ENCODE measurements at regions of chr10 and their contacts with region 1.

Region 1: GRCh38 chr10:117174439-117175214 is 22.7 kb upstream of the KCNK18 start:
- DNase-seq: peak; percentile 56
- ATAC-seq: peak; percentile 83
- H3K4me3 Mint-ChIP-seq: peak overlapping the region; percentile 85
- H3K27ac Mint-ChIP-seq: no peak overlapping the region
- H3K4me1 Mint-ChIP-seq: peaks cover 18% of the 10 kb centered on the region
- H3K27me3 Mint-ChIP-seq: peaks cover 38% of the 10 kb centered on the region
- CTCF ChIP-seq: no peak

Region 2: DNA sequence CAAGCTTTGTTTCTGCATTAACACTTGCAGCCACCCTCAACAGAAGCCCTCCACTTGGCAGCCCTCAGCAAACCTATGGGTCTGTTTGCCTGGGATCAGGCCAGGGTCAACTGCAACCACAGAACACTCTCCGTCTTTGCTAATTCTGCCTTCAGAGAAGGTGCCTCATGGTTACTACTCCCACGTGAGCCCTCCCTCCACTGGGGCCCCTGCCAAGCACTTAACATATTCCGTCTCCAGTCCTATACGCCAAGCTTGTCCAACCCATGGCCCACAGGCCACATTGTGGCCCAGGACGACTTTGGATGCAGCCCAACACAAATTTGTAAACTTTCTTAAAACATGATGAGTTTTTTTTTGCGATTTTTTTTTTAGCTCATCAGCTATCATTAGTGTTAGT is 487.0 kb before region 1 on chr10:
- CTCF ChIA-PET with region 1: interaction called, 15 read pairs
- POLR2A ChIA-PET with region 1: no interaction called
- intact Hi-C with region 1: loop called (anchors 1 kb)
- DNase-seq: no peak
- ATAC-seq: no peak
- H3K4me3 Mint-ChIP-seq: no peak overlapping the region
- H3K27ac Mint-ChIP-seq: no peak overlapping the region
- H3K4me1 Mint-ChIP-seq: no peaks in the 10 kb centered on the region
- H3K27me3 Mint-ChIP-seq: no peaks in the 10 kb centered on the region
- CTCF ChIP-seq: no peak

Region 3: GRCh38 chr10:116787893-116788665 is 386.5 kb before region 1 on chr10:
- CTCF ChIA-PET with region 1: interaction called, 10 read pairs
- POLR2A ChIA-PET with region 1: no interaction called
- intact Hi-C with region 1: no loop called
- DNase-seq: peak; percentile 49
- ATAC-seq: peak; percentile 82
- H3K4me3 Mint-ChIP-seq: peak overlapping the region; percentile 46
- H3K27ac Mint-ChIP-seq: no peak overlapping the region
- H3K4me1 Mint-ChIP-seq: peaks cover 12% of the 10 kb centered on the region
- H3K27me3 Mint-ChIP-seq: peaks cover 20% of the 10 kb centered on the region
- CTCF ChIP-seq: peak; percentile 96

Region 4: DNA sequence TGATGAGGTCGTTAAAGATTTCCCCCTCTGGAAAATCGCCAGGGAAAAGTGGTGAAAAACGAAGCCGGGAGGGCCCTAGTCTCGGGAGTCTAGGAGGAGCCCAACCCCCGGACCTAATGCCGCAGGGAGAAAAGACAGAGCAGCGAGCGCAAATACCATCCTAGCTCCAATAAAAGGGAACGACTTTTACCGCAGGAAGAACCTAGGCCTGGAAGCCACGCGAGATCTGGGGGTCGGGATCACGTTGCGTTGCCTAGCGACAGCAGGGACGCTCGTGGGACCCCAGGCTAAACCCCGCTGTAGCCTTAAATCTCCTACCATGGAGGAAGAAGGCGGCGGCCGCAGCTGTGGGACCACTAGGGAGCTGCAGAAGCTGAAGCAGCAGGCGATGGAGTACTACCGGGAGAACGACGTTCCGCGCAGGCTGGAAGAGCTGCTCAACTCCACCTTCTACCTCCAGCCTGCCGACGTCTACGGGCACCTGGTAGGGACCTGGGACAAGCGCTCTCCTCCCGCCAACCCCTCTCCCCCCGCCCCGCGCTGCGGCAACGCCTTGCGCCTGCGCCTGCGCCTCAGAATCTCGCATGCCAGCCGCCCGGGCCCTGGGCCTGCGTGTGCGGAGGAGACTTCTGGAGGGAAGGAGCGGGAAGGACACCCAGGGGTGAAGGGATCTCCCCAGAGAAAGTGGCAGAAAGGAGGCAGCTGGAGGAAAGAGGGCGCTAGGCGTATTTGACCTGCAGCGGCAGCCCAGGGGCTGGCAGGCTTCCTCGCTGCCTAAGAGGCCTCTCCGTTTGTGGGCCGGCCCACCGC is 325.2 kb before region 1 on chr10 and contains the start of gene ENO4:
- CTCF ChIA-PET with region 1: interaction called, 7 read pairs
- POLR2A ChIA-PET with region 1: no interaction called
- intact Hi-C with region 1: loop called (anchors 1 kb)
- DNase-seq: peak; percentile 44
- ATAC-seq: peak; percentile 58
- H3K4me3 Mint-ChIP-seq: peak within 1 kb of the TSS; percentile 86
- H3K27ac Mint-ChIP-seq: peak within 1 kb of the TSS; percentile 90
- H3K4me1 Mint-ChIP-seq: peaks cover 39% of the 10 kb centered on the region
- H3K27me3 Mint-ChIP-seq: peaks cover 13% of the 10 kb centered on the region
- CTCF ChIP-seq: no peak
- total RNA-seq, gene ENO4: 0.07 TPM in 1 of 2 replicates, not detected in the other

Region 5: GRCh38 chr10:117663750-117664149 is 489.1 kb after region 1 on chr10:
- CTCF ChIA-PET with region 1: no interaction called
- POLR2A ChIA-PET with region 1: no interaction called
- intact Hi-C with region 1: no loop called
- DNase-seq: no peak
- ATAC-seq: no peak
- H3K4me3 Mint-ChIP-seq: no peak overlapping the region
- H3K27ac Mint-ChIP-seq: no peak overlapping the region
- H3K4me1 Mint-ChIP-seq: no peaks in the 10 kb centered on the region
- H3K27me3 Mint-ChIP-seq: no peaks in the 10 kb centered on the region
- CTCF ChIP-seq: no peak

Measured in activated B cell treated with CpG ODN at 0.5 μM for 24 hours (primary cell).